ENCODE measurements at regions of chr17 and their contacts with region 1.

Region 1: DNA sequence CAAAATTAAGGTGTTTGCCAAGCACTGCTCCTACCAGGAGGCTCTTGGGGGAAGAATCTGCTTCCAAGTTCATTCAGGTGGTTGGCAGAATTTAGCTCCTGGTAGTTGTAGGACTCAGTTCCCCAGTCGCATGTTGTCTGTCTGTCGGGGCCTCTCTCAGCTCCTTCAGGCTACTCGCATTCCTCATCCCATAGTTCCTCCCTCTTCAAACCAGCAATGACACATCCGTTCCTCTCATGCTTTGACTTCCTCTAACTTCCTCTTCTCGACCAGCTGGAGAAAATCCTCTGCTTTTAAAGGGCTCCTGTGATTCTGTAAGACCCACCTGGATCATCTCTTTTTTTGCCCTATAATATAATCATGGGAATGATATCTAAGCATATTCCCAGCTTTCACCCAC is 108.1 kb downstream of the PMP22 start:
- DNase-seq: no peak
- ATAC-seq: peak in 1 of 8 donors; percentile 48
- H3K4me3 ChIP-seq: no peak overlapping the region
- H3K27ac ChIP-seq: no peak overlapping the region
- H3K4me1 ChIP-seq: peaks cover 0 to 3% (median 0%) of the 10 kb centered on the region in 9 donors
- H3K27me3 ChIP-seq: no peaks in the 10 kb centered on the region
- CTCF ChIP-seq: no peak

Region 2: DNA sequence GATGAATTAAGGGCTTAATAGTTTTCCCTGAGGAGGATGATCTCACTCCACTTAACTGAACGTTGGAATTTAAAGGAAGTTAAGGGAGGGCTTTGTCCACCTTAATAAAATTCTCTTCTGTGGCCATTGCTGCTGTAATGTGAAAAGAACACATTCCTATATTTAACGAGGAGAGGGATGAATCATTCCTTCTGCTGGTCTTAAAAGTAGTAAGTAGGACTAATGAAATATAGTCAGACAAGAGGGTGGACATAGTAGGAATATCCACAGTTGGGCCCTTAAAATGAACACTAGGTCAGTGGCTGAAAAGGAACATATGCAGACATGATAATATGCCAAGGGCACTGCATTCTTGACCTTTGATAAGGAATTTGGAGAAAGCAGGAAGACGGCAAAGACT is 297.5 kb before region 1 on chr17:
- intact Hi-C with region 1: no loop called
- DNase-seq: no peak
- ATAC-seq: no peak
- H3K4me3 ChIP-seq: no peak overlapping the region
- H3K27ac ChIP-seq: no peak overlapping the region
- H3K4me1 ChIP-seq: no peaks in the 10 kb centered on the region
- H3K27me3 ChIP-seq: no peaks in the 10 kb centered on the region
- CTCF ChIP-seq: no peak

Region 3: GRCh38 chr17:14935139-14935841 is 221.8 kb before region 1 on chr17:
- intact Hi-C with region 1: loop called in 7 of 10 experiments (anchors 2 to 10 kb)
- DNase-seq: no peak
- ATAC-seq: peak in 1 of 8 donors; percentile 45
- H3K4me3 ChIP-seq: no peak overlapping the region
- H3K27ac ChIP-seq: no peak overlapping the region
- H3K4me1 ChIP-seq: no peaks in the 10 kb centered on the region
- H3K27me3 ChIP-seq: no peaks in the 10 kb centered on the region
- CTCF ChIP-seq: peak in 2 of 9 donors; percentile 10 to 24

Region 4: GRCh38 chr17:14940108-14940945 is 216.7 kb before region 1 on chr17:
- intact Hi-C with region 1: loop called in 7 of 10 experiments (anchors 2 to 10 kb)
- DNase-seq: no peak
- ATAC-seq: peak in 2 of 8 donors; percentile 43 to 62
- H3K4me3 ChIP-seq: no peak overlapping the region
- H3K27ac ChIP-seq: no peak overlapping the region
- H3K4me1 ChIP-seq: no peaks in the 10 kb centered on the region
- H3K27me3 ChIP-seq: no peaks in the 10 kb centered on the region
- CTCF ChIP-seq: no peak

Region 5: DNA sequence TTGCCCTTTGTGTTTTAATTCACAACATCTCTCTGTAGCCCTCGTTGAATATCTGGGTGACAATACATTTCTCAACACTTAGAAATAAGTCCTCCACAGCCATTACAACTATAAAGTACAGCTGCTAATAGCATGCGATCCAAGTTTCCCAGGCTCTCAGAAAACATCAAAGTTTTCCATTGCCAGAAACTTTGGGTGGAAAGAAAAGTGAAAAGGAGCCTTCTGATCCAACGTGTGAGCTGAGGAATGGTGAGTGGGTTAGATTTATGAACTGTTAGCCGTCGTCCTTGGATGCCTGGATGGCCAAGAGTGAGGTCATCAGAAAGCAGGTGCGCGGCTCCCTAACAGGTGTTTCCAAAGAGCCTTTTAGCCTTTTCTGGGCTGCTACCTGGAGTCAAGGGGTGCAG is 149.9 kb before region 1 on chr17:
- intact Hi-C with region 1: loop called in 1 of 10 experiments (anchors 10 kb)
- DNase-seq: no peak
- ATAC-seq: peak in 1 of 8 donors; percentile 16
- H3K4me3 ChIP-seq: no peak overlapping the region
- H3K27ac ChIP-seq: no peak overlapping the region
- H3K4me1 ChIP-seq: no peaks in the 10 kb centered on the region
- H3K27me3 ChIP-seq: no peaks in the 10 kb centered on the region
- CTCF ChIP-seq: no peak

Region 6: GRCh38 chr17:15091825-15092224 is 65.2 kb before region 1 on chr17:
- intact Hi-C with region 1: loop called in 1 of 10 experiments (anchors 10 kb)
- DNase-seq: no peak
- ATAC-seq: peak in 1 of 8 donors; percentile 2
- H3K4me3 ChIP-seq: no peak overlapping the region
- H3K27ac ChIP-seq: peak overlapping the region; percentile 27 to 89 (median 74)
- H3K4me1 ChIP-seq: peaks cover 0 to 21% (median 6%) of the 10 kb centered on the region in 9 donors
- H3K27me3 ChIP-seq: no peaks in the 10 kb centered on the region
- CTCF ChIP-seq: peak in 1 of 9 donors; percentile 9

Region 7: GRCh38 chr17:15180121-15180561 is 23.1 kb after region 1 on chr17:
- intact Hi-C with region 1: no loop called
- DNase-seq: no peak
- ATAC-seq: no peak
- H3K4me3 ChIP-seq: no peak overlapping the region
- H3K27ac ChIP-seq: no peak overlapping the region
- H3K4me1 ChIP-seq: peaks cover 0 to 4% (median 2%) of the 10 kb centered on the region in 9 donors
- H3K27me3 ChIP-seq: no peaks in the 10 kb centered on the region
- CTCF ChIP-seq: no peak

Region 8: DNA sequence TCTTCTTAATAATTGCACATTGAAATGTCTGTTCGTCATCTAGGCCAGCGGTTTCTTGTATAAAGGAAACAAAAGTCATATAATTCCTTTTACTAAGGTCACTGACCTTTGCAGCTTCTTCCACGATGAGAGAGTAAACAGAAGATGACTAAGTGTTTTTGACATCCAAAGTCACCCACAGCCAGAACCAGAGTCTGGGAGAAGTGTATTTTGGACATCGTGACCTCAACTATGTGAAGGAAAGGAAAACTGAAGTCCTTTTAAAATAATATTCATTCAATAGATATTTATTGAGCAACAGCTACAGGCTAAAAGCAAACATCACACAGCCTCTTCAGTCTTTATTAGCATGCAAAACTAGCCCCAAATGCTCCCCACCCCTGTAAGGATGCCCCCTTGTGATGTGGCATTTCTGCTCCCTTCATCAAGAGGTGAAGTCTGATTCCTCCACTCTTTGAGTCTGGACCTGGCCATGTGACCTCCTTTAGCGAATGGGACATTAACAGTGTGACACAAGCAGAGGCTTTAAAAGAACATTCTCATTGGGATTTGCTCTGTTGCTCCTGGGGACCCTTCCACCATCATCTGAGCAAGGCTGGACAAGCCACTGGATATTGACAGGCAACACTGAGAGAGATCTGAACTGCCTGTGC is 116.2 kb after region 1 on chr17:
- intact Hi-C with region 1: no loop called
- DNase-seq: no peak
- ATAC-seq: peak in 1 of 8 donors; percentile 37
- H3K4me3 ChIP-seq: no peak overlapping the region
- H3K27ac ChIP-seq: peak overlapping the region in 2 of 10 donors; percentile 38 to 44
- H3K4me1 ChIP-seq: peaks cover 0 to 37% (median 23%) of the 10 kb centered on the region in 9 donors
- H3K27me3 ChIP-seq: no peaks in the 10 kb centered on the region
- CTCF ChIP-seq: no peak

Region 9: DNA sequence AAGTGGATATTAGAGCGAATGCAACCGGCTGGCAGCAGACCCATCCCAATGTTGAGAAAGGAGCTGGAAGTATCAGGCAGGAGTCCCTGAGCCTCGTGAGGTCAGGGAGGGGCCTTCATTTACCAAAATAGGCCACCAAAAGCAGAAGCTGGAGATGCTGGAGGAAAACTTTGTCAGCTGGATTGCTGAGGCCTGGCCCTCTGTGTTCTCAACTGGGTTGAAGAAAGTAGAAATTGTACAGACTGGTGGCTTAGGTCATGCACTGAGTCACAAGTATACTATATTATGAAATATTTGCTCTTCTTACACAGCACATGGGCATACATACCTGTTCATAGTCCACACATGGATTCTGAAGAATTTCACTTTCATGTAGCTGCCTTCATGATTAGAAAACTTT is 207.6 kb after region 1 on chr17:
- intact Hi-C with region 1: no loop called
- DNase-seq: no peak
- ATAC-seq: peak in 5 of 8 donors; percentile 30 to 78 (median 69)
- H3K4me3 ChIP-seq: no peak overlapping the region
- H3K27ac ChIP-seq: peak overlapping the region in 1 of 10 donors; percentile 34
- H3K4me1 ChIP-seq: no peaks in the 10 kb centered on the region
- H3K27me3 ChIP-seq: no peaks in the 10 kb centered on the region
- CTCF ChIP-seq: no peak

Measured in heart right ventricle (tissue), 16 donors.